ENCODE measurements at regions of chr2 and their contacts with region 1.

Region 1: GRCh38 chr2:134178241-134178877 is 75.5 kb upstream of the MGAT5 start:
- DNase-seq: no peak
- ATAC-seq: no peak
- H3K4me3 ChIP-seq: no peak overlapping the region
- H3K27ac ChIP-seq: peak overlapping the region in 2 of 12 donors; percentile 3 to 6
- H3K4me1 ChIP-seq: peaks cover 0 to 87% (median 62%) of the 10 kb centered on the region in 12 donors
- H3K27me3 ChIP-seq: no peaks in the 10 kb centered on the region
- CTCF ChIP-seq: no peak
- POLR2A ChIP-seq: no peak

Region 2: GRCh38 chr2:134127496-134127895 is 50.9 kb before region 1 on chr2:
- intact Hi-C with region 1: loop called in 5 of 10 experiments (anchors 5 to 10 kb)
- DNase-seq: no peak
- ATAC-seq: peak in 1 of 4 donors; percentile 68
- H3K4me3 ChIP-seq: no peak overlapping the region
- H3K27ac ChIP-seq: no peak overlapping the region
- H3K4me1 ChIP-seq: peaks cover 16 to 84% (median 68%) of the 10 kb centered on the region in 12 donors
- H3K27me3 ChIP-seq: no peaks in the 10 kb centered on the region
- CTCF ChIP-seq: no peak
- POLR2A ChIP-seq: no peak

Region 3: DNA sequence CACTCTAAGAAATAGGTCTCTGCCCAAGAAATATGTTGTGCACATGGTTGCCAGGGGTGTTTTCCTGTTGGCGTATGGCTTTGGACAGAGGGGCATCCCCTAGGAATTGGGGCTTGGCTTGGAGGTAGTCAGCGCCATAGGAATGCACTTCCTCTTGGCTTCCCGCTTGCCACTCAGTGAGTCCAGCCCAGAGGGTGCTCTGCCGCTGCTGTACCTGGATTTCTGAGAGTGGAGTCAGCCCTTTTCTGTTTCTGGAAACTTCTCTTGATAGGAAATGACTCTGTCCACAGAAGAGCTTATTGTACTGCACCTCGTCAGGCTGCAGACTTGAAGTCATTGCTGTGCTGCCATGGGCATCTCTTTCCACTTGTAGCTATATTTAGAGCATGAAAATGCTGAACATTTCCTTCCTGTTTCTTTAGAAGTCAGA is 41.2 kb before region 1 on chr2:
- intact Hi-C with region 1: loop called in 4 of 10 experiments (anchors 5 kb)
- DNase-seq: peak in 4 of 5 donors; percentile 48 to 77 (median 55)
- ATAC-seq: peak; percentile 60 to 78 (median 71)
- H3K4me3 ChIP-seq: peak overlapping the region in 10 of 12 donors; percentile 1 to 45 (median 32)
- H3K27ac ChIP-seq: peak overlapping the region; percentile 30 to 89 (median 82)
- H3K4me1 ChIP-seq: peaks cover 16 to 99% (median 87%) of the 10 kb centered on the region in 12 donors
- H3K27me3 ChIP-seq: no peaks in the 10 kb centered on the region
- CTCF ChIP-seq: peak in 1 of 12 donors; percentile 6
- POLR2A ChIP-seq: no peak

Measured in heart left ventricle (tissue), 16 donors.